ENCODE measurements at regions of chr5 and their contacts with region 1.

Region 1: DNA sequence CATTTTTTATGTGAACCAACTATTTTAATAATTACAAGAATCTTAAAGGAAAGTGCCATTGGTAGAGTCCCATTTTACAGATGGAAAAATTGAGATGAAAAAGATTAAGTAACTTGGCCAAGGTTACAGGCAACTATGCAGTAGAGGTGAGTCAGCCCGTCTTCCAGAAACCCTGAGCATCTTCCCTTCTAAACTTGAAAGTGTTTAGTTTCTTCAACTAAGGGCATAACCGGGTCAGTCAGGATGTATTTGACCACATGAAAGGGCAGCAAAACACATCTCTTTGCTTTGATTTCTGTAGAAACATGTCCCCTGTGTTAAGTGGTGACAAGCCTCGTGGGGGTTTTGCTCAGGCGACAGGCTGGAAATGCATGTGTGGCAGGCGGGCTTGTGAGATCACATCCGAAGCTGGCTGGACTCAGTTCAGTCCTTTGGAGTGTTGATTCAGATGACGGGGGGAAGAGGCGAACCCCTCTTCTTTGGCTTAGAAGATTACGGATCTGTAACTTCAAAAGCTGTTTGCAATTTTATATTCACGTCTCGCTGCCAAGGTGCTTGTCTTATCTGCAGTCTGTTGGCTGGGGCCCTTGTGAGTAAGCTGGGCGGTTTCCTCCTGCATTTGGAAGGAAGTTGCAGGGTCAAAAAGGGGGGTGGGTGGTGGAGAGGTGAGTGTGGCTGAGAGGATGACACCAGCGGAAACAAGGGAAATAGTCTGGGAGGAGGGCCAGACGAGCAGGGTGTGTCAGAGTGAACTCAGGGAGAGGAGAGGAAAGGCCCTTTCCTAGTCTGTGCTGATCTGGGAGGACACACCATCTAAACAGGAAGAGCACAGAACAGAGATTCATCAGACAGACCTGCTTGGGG is 78.9 kb upstream of the RPS23 start:
- DNase-seq: peak; percentile 83 to 96 (median 90)
- H3K4me3 ChIP-seq: peak overlapping the region; percentile 4 to 39
- H3K4me3 Mint-ChIP-seq: peak overlapping the region; percentile 76 to 89 (median 85)
- H3K27ac ChIP-seq: peak overlapping the region; percentile 62
- H3K27ac Mint-ChIP-seq: peak overlapping the region; percentile 97 to 98 (median 98)
- H3K4me1 ChIP-seq: peaks cover 34% of the 10 kb centered on the region
- H3K4me1 Mint-ChIP-seq: peaks cover 22 to 42% (median 32%) of the 10 kb centered on the region in 4 donors
- H3K27me3 ChIP-seq: no peaks in the 10 kb centered on the region
- H3K27me3 Mint-ChIP-seq: no peaks in the 10 kb centered on the region

Region 2: GRCh38 chr5:82278095-82278918 is 78.7 kb before region 1 on chr5 and contains the start of gene RPS23:
- CTCF ChIA-PET with region 1: interaction called, 3 read pairs
- POLR2A ChIA-PET with region 1: interaction called, 7 read pairs
- intact Hi-C with region 1: loop called (anchors 2 kb)
- DNase-seq: peak; percentile 86 to 89 (median 88)
- H3K4me3 ChIP-seq: peak within 1 kb of the TSS; percentile 84 to 93
- H3K4me3 Mint-ChIP-seq: peak within 1 kb of the TSS; percentile 86 to 99 (median 96)
- H3K27ac ChIP-seq: peak within 1 kb of the TSS; percentile 79
- H3K27ac Mint-ChIP-seq: peak within 1 kb of the TSS; percentile 94 to 99 (median 98)
- H3K4me1 ChIP-seq: peaks cover 23% of the 10 kb centered on the region
- H3K4me1 Mint-ChIP-seq: peaks cover 15 to 48% (median 30%) of the 10 kb centered on the region in 4 donors
- H3K27me3 ChIP-seq: no peaks in the 10 kb centered on the region
- H3K27me3 Mint-ChIP-seq: no peaks in the 10 kb centered on the region
- total RNA-seq, gene RPS23: 2,959 to 3,147 TPM

Region 3: DNA sequence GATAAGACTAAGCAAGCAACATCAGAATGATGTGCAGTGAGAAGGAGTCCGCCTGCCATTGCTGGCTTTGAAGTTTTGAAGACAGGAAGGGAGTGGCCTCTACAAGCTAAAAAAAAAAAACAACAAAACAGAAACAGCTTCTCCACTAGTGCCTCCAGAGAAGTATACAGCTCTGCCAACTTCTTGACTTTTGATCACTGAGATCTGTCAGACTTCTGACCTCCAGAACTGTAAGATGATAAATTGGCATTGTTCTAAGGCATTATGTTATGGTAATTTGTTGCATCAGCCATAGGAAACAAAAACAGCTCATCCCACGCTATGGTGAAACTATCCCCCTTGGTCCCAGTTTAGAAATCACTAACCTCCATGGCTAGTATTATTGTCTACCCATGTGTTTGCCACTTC is 983.5 kb after region 1 on chr5:
- CTCF ChIA-PET with region 1: no interaction called
- POLR2A ChIA-PET with region 1: interaction called, 3 read pairs
- intact Hi-C with region 1: loop called (anchors 1 kb)
- DNase-seq: peak in 4 of 5 donors; percentile 48 to 61 (median 54)
- H3K4me3 ChIP-seq: peak overlapping the region in 1 of 2 donors; percentile 6
- H3K4me3 Mint-ChIP-seq: peak overlapping the region; percentile 36 to 79 (median 68)
- H3K27ac ChIP-seq: peak overlapping the region; percentile 13
- H3K27ac Mint-ChIP-seq: peak overlapping the region; percentile 68 to 93 (median 87)
- H3K4me1 ChIP-seq: peaks cover 23% of the 10 kb centered on the region
- H3K4me1 Mint-ChIP-seq: peaks cover 20 to 24% (median 21%) of the 10 kb centered on the region in 4 donors
- H3K27me3 ChIP-seq: no peaks in the 10 kb centered on the region
- H3K27me3 Mint-ChIP-seq: no peaks in the 10 kb centered on the region

Region 4: GRCh38 chr5:83430130-83431010 is 1073.3 kb after region 1 on chr5:
- CTCF ChIA-PET with region 1: interaction called, 14 read pairs
- POLR2A ChIA-PET with region 1: no interaction called
- intact Hi-C with region 1: loop called (anchors 1 kb)
- DNase-seq: peak; percentile 45 to 58 (median 52)
- H3K4me3 ChIP-seq: no peak overlapping the region
- H3K4me3 Mint-ChIP-seq: no peak overlapping the region
- H3K27ac ChIP-seq: no peak overlapping the region
- H3K27ac Mint-ChIP-seq: no peak overlapping the region
- H3K4me1 ChIP-seq: no peaks in the 10 kb centered on the region
- H3K4me1 Mint-ChIP-seq: no peaks in the 10 kb centered on the region
- H3K27me3 ChIP-seq: no peaks in the 10 kb centered on the region
- H3K27me3 Mint-ChIP-seq: peaks cover 0 to 2% of the 10 kb centered on the region in 2 donors